Head of caudate nucleus (tissue), 42 donors: ENCODE measurements at regions of chr2 and their contacts with region 1.

Region 1: GRCh38 chr2:71923887-71924533 is 223.7 kb downstream of the CYP26B1 start:
- DNase-seq: peak in 41 of 42 donors; percentile 35 to 90 (median 71)

Region 2: DNA sequence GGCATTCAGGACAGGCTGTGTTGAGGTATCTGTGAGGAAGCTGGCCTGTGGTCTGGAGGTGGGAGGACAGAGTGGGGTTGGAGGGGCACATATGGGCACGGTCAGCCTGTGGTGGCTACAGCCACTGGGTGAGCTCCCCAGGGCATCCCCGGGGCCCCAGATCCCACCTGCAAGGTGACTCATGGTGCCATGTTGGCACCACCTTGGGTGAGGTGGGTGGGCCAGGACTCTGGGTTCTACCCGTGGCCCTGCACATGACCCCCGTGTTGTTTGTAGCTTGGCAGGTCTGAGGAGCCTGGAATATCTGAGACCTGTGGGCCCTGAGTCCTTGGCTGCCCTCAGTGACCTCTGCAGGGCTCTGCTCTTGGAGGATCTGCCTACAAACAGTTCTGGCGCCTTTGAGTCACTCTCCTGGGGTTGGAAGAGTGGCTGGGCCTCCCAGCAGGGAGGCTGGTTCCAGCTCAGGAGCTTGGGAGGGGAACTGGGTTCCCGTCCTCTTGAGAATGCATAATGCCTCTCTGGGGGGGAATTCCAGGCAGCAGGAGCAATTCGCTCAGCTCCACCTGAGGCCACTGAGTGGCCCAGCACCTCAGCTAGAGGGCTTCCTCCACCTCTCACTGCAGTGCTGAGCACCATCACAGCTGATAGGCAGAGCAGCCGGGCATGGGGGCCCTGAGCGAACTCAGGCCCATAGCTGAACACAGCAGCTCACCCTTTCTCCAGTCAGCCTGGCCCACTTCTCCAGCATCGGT is 365.5 kb before region 1 on chr2:
- intact Hi-C with region 1: loop called (anchors 10 kb)
- DNase-seq: no peak

Region 3: GRCh38 chr2:72150157-72150865 is 226.3 kb after region 1 on chr2:
- intact Hi-C with region 1: loop called (anchors 2 kb)
- DNase-seq: peak; percentile 63 to 97 (median 88)

Region 4: DNA sequence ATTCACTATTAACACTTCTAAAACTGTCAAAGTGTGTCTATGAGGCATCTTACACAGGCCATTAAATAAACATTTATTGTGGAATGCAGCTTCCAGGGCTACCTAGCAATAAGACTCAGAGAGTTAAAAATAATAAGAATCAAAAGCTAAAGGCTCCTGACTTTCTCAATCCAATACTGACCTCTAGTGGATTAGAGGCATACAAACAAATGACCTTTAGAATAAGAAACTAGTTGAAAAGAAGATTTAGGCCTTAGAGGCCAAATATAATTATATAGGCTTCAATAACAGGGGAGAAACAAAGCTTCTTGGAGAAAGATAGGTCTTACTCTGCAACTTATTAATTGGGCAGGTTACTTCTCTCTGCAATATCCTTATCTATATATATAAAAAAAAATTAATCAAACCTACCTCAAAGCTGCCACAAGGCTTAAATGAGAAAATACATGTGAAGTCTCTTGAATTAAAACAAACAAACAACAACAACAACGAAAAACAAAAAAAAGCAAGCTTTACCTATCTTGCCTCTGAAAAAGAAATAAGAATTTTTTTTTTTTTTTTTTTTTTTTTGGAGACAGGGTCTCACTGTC is 655.7 kb after region 1 on chr2:
- intact Hi-C with region 1: loop called (anchors 10 kb)
- DNase-seq: no peak

Region 5: DNA sequence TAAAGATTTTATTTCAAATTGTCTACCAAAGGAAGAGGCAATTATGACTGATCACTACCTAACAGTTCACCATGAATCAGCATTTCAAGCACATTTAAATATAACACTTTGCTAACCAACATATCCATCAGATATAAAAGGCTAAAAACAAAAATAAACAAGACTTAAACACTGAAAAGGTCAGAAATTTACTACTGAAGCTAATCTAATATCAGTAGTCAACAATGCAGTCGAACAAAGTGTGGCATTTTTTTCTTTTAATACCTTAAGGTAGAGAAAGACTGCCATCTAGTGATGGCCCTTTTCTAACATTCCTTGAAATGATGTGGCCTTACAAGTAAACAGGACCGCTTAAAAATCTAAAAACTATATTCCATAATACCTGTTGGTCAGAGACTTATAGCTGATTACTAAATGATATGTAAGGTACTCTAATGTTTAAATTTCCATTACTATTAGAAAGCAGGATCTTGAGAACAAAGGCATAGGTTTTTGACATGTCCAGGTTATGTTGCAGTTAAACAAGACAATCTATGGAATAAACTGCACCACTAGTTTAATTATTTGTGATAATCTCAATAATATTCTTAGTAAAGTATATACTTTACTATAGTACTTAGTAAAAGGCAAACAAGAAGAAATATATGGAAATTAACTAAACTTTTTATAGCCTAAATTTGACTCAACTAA is 821.8 kb after region 1 on chr2:
- intact Hi-C with region 1: loop called (anchors 5 kb)
- DNase-seq: peak in 7 of 42 donors; percentile 11 to 51 (median 32)